ENCODE measurements at regions of chr10 and their contacts with region 1.

Region 1: DNA sequence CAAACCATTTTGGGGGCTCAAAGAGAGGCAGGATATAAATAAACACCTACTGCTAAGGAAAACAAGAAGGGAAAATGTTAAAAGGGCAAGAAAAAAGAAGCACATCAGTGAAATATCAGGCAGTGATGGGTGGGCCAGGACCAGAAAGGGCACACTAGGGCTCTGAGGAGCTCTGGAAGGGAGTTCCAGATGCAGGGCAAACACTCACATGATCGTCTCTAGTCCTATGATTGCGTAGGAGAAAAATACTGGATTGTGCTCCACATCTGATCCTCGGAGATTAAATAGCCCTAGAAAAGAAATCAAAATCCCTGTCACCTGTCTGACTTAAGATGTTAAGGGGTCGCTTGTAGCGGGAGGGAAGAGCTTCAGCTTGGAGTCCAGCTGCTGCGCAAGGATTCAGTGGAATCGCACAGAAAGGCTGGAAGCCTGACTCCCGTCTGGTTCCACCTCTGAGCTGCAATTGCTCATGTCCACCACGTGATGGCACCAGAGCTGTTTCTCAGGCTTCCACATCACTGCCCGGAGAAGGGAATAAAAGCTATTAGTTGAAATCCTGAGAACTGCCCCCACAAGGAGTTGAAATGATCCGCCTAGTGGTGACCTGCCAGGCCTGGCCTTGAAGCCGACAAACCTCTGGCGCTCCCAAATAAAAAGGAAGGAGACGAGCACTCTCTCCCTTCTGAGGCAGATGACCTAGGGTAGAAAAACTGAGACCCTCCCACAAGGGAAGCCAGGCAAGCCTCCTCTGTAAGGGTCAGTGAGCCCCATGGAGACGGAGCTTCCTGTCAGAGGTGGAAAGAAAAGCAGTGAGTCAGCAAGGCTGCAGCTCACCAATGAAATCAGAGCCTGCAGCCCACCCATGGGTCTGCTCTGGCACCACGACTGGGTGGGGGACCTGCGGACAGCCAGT is 39.2 kb downstream of the XPNPEP1 start:
- DNase-seq: peak; percentile 82
- ATAC-seq: peak; percentile 92
- H3K4me3 ChIP-seq: no peak overlapping the region
- H3K27ac ChIP-seq: no peak overlapping the region
- H3K4me1 ChIP-seq: peaks cover 6% of the 10 kb centered on the region
- H3K27me3 ChIP-seq: no peaks in the 10 kb centered on the region
- CTCF ChIP-seq: peak; percentile 87

Region 2: DNA sequence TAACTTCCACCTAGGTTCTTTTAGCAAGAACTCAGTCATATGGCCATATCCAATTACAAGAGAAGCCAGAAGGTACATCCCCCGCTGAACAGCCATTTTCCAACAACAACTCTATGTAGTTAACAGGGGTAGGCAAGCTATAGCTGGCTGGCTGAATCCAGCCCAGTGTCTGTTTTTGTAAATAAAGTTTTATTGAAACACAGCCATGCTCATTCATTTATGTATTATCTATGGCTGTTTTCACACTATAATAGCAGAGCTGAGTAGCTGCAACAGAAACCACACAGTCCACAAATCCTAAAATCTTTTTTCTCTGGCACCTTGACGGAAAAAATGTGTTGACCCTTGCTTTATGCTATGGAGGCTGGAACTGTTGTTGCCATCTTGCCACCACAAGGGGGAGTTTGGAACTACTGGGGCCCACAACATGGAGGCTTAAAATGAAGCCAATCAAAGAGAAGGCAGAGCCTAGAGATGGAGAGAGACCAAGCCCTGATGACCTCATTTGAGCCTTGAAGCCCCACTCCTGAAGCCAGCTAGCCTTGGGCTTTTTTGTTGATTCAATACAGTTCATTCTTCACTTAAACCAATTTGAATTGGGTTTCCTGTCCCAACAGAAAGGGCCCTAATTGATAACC is 72.5 kb after region 1 on chr10:
- CTCF ChIA-PET with region 1: no interaction called
- POLR2A ChIA-PET with region 1: no interaction called
- intact Hi-C with region 1: loop called (anchors 2 kb)
- DNase-seq: peak; percentile 56
- ATAC-seq: peak; percentile 55; the same call in 1 of the 2 replicates
- H3K4me3 ChIP-seq: no peak overlapping the region
- H3K27ac ChIP-seq: no peak overlapping the region
- H3K4me1 ChIP-seq: peaks cover 4% of the 10 kb centered on the region; the same call in 1 of the 2 replicates
- H3K27me3 ChIP-seq: no peaks in the 10 kb centered on the region
- CTCF ChIP-seq: peak; percentile 69; the same call in 1 of the 2 replicates

Region 3: DNA sequence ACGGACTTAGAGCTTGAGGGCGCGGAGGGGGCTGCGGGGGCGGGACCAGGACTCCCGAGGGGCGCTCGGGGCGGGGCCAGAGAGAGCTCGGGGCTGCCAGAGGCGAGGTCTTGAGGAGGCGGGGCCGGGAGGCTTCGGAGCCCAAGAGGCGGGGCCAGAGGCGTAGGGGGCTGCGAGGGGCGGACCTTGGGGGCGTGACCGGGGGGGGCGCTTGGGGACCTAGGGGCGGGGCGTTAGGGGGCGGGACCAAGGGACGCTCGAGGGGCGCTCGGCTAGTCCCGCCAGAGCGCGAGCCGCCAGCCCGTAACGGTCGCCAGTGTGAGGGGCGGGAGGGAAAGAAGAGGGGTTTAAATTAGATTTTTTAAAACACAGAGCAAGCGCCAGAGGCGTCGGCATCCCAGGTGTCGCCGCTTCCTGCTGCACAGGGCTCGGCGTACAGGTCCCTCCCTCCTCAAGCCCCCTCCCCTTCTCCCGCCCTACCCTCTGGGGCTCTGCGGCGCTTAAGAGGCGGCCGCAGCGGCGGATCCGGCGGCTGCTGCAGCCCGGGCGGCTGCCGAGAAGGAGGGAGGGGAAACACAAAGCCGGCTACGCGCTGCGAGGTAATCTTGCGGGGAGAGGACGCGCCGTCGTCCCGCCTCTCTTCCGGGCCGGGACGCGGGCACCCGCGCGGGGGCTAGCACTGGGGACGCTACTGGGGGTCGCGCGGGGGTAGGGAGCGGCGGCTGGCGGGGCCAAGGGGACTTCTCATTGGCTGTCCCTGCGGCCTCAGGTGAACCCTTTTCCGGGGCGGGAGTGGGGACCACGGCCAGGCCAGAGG is 123.8 kb after region 1 on chr10 and contains the start of gene ADD3:
- CTCF ChIA-PET with region 1: interaction called, 5 read pairs
- POLR2A ChIA-PET with region 1: no interaction called
- intact Hi-C with region 1: loop called (anchors 2 kb)
- DNase-seq: peak; percentile 47
- ATAC-seq: peak; percentile 79
- H3K4me3 ChIP-seq: peak within 1 kb of the TSS; percentile 92
- H3K27ac ChIP-seq: no peak within 1 kb of the TSS
- H3K4me1 ChIP-seq: peaks cover 37% of the 10 kb centered on the region
- H3K27me3 ChIP-seq: no peaks in the 10 kb centered on the region
- CTCF ChIP-seq: no peak
- total RNA-seq, gene ADD3: 25.7 and 30.3 TPM in 2 replicates

Region 4: GRCh38 chr10:110137142-110137545 is 253.0 kb after region 1 on chr10:
- CTCF ChIA-PET with region 1: interaction called, 3 read pairs
- POLR2A ChIA-PET with region 1: no interaction called
- intact Hi-C with region 1: loop called (anchors 1 kb)
- DNase-seq: peak; percentile 72
- ATAC-seq: peak; percentile 55
- H3K4me3 ChIP-seq: no peak overlapping the region
- H3K27ac ChIP-seq: no peak overlapping the region
- H3K4me1 ChIP-seq: no peaks in the 10 kb centered on the region
- H3K27me3 ChIP-seq: no peaks in the 10 kb centered on the region
- CTCF ChIP-seq: peak; percentile 85

Region 5: GRCh38 chr10:110279407-110279986 is 395.4 kb after region 1 on chr10:
- CTCF ChIA-PET with region 1: no interaction called
- POLR2A ChIA-PET with region 1: no interaction called
- intact Hi-C with region 1: no loop called
- DNase-seq: peak; percentile 62
- ATAC-seq: peak; percentile 63
- H3K4me3 ChIP-seq: 0 out of 2 replicates have a peak overlapping the region, but pooled peaks have one; percentile 32
- H3K27ac ChIP-seq: no peak overlapping the region
- H3K4me1 ChIP-seq: no peaks in the 10 kb centered on the region
- H3K27me3 ChIP-seq: no peaks in the 10 kb centered on the region
- CTCF ChIP-seq: peak; percentile 75

Measured in PC-3 (cell line).